HCT116 (cell line): ENCODE measurements at regions of chr16 and their contacts with region 1.

Region 1: GRCh38 chr16:89815639-89816348 is 653 bp downstream of the FANCA start:
- DNase-seq: no peak
- ATAC-seq: peak; percentile 39
- H3K4me3 ChIP-seq: peak overlapping the region; percentile 79 to 98
- H3K27ac ChIP-seq: peak overlapping the region; percentile 92
- H3K4me1 ChIP-seq: peaks cover 9 to 22% of the 10 kb centered on the region in 2 experiments; a peak in 3 of 4 replicates
- H3K27me3 ChIP-seq: no peaks in the 10 kb centered on the region
- CTCF ChIP-seq: no peak
- POLR2A ChIP-seq: no peak
- RAD21 ChIP-seq: no peak

Region 2: DNA sequence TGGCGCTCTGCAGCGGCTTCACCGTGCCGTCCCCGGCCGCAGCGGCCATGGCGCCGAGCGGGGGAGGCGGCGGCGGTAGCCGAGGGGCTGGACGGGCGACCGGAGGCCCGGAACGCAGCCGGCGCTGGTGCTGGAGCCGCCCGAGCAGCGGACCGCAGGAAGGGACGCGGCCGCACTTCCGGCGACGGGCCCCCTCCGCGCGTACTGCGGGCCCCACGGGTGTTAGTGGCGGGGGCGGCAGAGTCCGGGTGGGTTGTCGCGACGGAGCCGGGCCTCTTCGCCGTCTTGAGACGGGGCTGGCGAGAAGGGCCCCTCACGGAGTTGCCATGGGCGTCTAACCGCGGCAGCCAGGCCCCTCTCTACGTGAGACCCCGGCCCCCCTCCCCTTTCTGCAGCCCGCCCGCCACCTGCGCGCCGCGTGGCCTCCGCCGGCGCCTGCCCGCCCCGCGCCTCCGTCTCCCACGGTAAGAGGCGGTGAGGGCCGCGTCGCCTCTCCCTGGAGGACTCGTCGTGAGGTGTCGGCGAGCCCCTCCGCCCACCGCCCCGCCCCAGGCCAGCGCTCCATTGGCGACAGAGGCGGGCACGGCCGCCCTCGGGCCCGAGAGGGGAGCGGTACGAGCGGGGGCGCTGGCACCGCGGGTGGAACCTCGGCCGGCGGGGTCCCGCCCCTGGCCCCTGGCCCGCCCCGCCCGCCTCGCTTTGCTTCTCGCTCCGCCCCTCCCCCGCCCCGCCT is 94.8 kb before region 1 on chr16 and contains the starts of genes VPS9D1 and ZNF276:
- CTCF ChIA-PET with region 1: no interaction called
- POLR2A ChIA-PET with region 1: no interaction called
- RAD21 ChIA-PET with region 1: no interaction called
- intact Hi-C with region 1: loop called (anchors 2 kb)
- DNase-seq: peak; percentile 60
- ATAC-seq: peak; percentile 67
- H3K4me3 ChIP-seq: peak within 1 kb of the TSS; percentile 70 to 88
- H3K27ac ChIP-seq: peak within 1 kb of the TSS; percentile 97
- H3K4me1 ChIP-seq: peaks cover 28 to 53% of the 10 kb centered on the region in 2 experiments
- H3K27me3 ChIP-seq: no peaks in the 10 kb centered on the region
- CTCF ChIP-seq: no peak
- POLR2A ChIP-seq: peak; percentile 72
- RAD21 ChIP-seq: no peak
- total RNA-seq, gene VPS9D1: 4.2 TPM
- total RNA-seq, gene ZNF276: 49.9 TPM

Region 3: GRCh38 chr16:89828199-89828778 is 12.5 kb after region 1 on chr16 and contains the start of gene SPIRE2:
- CTCF ChIA-PET with region 1: no interaction called
- POLR2A ChIA-PET with region 1: interaction called, 5 read pairs
- RAD21 ChIA-PET with region 1: no interaction called
- intact Hi-C with region 1: loop called (anchors 1 kb)
- DNase-seq: no peak
- ATAC-seq: peak; percentile 78
- H3K4me3 ChIP-seq: peak within 1 kb of the TSS; percentile 68 to 72
- H3K27ac ChIP-seq: peak within 1 kb of the TSS; percentile 86
- H3K4me1 ChIP-seq: peaks cover 16 to 26% of the 10 kb centered on the region in 2 experiments
- H3K27me3 ChIP-seq: no peaks in the 10 kb centered on the region
- CTCF ChIP-seq: no peak
- POLR2A ChIP-seq: peak; percentile 44
- RAD21 ChIP-seq: no peak
- total RNA-seq, gene SPIRE2: 21.2 TPM

Region 4: GRCh38 chr16:89873972-89874689 is 58.3 kb after region 1 on chr16:
- CTCF ChIA-PET with region 1: no interaction called
- POLR2A ChIA-PET with region 1: interaction called, 8 read pairs
- RAD21 ChIA-PET with region 1: no interaction called
- intact Hi-C with region 1: loop called (anchors 5 kb)
- DNase-seq: peak; percentile 94
- ATAC-seq: peak; percentile 76
- H3K4me3 ChIP-seq: peak overlapping the region; percentile 87 to 91
- H3K27ac ChIP-seq: peak overlapping the region; percentile 100
- H3K4me1 ChIP-seq: peaks cover 12 to 23% of the 10 kb centered on the region in 2 experiments
- H3K27me3 ChIP-seq: no peaks in the 10 kb centered on the region
- CTCF ChIP-seq: no peak
- POLR2A ChIP-seq: no peak
- RAD21 ChIP-seq: no peak

Region 5: GRCh38 chr16:89906139-89907028 is 90.6 kb after region 1 on chr16:
- CTCF ChIA-PET with region 1: no interaction called
- POLR2A ChIA-PET with region 1: no interaction called
- RAD21 ChIA-PET with region 1: no interaction called
- intact Hi-C with region 1: no loop called
- DNase-seq: no peak
- ATAC-seq: no peak
- H3K4me3 ChIP-seq: no peak overlapping the region
- H3K27ac ChIP-seq: no peak overlapping the region; the same call in 1 of the 2 replicates
- H3K4me1 ChIP-seq: peaks cover 4 to 11% of the 10 kb centered on the region in 2 experiments; a peak in 3 of 4 replicates
- H3K27me3 ChIP-seq: no peaks in the 10 kb centered on the region
- CTCF ChIP-seq: peak in 1 of 3 experiments; percentile 27; a peak in 1 of 6 replicates
- POLR2A ChIP-seq: no peak
- RAD21 ChIP-seq: no peak